Vagina (tissue), 2 donors: ENCODE measurements at regions of chr12 and their contacts with region 1.

Region 1: GRCh38 chr12:73321776-73322175 is 1049.6 kb downstream of the TRHDE start:
- DNase-seq: no peak
- H3K4me3 ChIP-seq: no peak overlapping the region
- H3K27ac ChIP-seq: no peak overlapping the region
- H3K4me1 ChIP-seq: no peaks in the 10 kb centered on the region
- H3K27me3 ChIP-seq: no peaks in the 10 kb centered on the region
- CTCF ChIP-seq: no peak
- POLR2A ChIP-seq: no peak

Region 2: DNA sequence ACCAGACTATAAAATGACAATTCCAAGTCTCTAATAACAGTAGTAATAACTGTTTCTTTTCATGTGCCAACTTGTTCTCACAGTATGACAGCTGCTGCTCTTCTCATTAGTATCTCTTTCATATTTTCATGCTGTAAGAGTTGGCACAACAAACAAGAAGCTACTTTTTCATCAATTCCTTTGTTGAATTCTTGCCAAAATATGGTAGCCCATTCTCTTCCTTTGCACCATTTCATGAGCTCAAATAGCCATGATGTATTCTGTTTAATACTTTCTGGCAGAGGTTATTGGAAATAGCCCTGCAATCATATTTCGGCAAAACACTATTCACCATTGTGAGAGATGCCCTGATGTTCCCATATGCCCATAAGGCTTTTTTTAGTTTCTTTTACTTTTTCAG is 51.1 kb after region 1 on chr12:
- intact Hi-C with region 1: loop called (anchors 2 kb)
- DNase-seq: no peak
- H3K4me3 ChIP-seq: no peak overlapping the region
- H3K27ac ChIP-seq: no peak overlapping the region
- H3K4me1 ChIP-seq: no peaks in the 10 kb centered on the region
- H3K27me3 ChIP-seq: no peaks in the 10 kb centered on the region
- CTCF ChIP-seq: no peak
- POLR2A ChIP-seq: no peak